ENCODE measurements at regions of chr14 and their contacts with region 1.

Region 1: DNA sequence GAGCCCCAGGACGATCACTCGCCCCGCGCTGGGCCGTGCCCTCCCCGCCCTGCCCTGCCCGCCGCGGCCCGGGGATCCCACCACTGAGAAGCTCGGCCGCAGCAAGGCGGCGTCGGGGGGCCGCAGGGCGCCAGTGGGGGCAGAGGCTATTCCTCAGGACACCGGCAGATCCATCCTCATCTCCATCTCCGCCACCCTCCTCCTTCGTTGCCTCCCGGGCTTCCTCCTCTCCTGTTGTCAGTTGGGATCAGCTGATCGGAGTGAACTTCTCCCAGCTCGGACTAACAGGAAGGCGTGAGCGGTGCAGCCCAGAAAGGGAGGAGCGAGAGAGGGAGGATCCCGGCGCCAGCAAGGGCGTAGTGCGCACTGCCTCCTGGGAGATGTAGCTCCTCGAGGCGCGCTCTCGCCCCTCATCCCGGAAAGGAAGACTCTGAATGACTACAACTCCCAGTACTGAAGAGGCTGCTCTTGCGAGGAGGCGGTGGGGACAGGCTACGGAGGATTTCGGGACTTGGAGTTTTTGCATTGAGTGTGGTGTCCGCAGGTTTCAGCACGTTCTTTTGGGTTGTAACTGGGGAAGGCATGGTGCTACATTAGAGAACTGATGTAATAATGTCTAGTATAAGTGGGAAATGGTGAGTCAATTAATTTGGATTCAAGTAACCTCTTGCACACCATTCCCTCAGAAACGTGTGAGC is at the start of gene ZFYVE1:
- DNase-seq: peak; percentile 96
- ATAC-seq: peak; percentile 99
- H3K4me3 ChIP-seq: peak within 1 kb of the TSS; percentile 71 to 97 (median 84)
- H3K27ac ChIP-seq: peak within 1 kb of the TSS; percentile 56
- H3K4me1 ChIP-seq: peaks cover 22% of the 10 kb centered on the region
- H3K27me3 ChIP-seq: no peaks in the 10 kb centered on the region
- CTCF ChIP-seq: 0 out of 2 replicates have a peak, but pooled peaks have one; percentile 7
- EP300 ChIP-seq: no peak
- POLR2A ChIP-seq: peak; percentile 55 to 69
- RAD21 ChIP-seq: no peak
- total RNA-seq, gene ZFYVE1: 2.6 and 2.8 TPM in 2 replicates

Region 2: DNA sequence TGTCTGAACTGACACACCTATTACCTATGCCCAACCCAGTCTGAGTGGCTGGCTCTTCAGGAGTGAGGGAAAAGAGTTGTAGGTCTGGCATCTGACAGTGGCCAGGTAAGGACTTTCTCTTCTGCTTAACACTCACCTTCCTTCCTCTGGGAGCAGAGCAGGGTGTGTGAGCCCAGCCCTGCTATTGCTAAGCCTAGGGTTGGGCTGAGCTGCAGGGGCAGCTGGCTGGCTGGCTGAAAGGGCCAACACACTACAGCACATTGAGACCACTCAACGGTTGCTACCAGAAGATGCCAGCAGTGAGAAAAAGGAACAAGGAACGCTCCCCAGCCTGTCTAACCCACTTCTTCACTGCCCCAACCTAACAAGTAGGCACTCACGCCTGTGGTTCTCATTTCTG is 334.3 kb before region 1 on chr14:
- CTCF ChIA-PET with region 1: no interaction called
- POLR2A ChIA-PET with region 1: no interaction called
- in situ Hi-C with region 1: no loop called
- intact Hi-C with region 1: no loop called
- DNase-seq: no peak
- ATAC-seq: peak; percentile 60
- H3K4me3 ChIP-seq: no peak overlapping the region
- H3K27ac ChIP-seq: no peak overlapping the region
- H3K4me1 ChIP-seq: no peaks in the 10 kb centered on the region
- H3K27me3 ChIP-seq: no peaks in the 10 kb centered on the region
- CTCF ChIP-seq: no peak
- EP300 ChIP-seq: no peak
- POLR2A ChIP-seq: no peak
- RAD21 ChIP-seq: no peak

Region 3: DNA sequence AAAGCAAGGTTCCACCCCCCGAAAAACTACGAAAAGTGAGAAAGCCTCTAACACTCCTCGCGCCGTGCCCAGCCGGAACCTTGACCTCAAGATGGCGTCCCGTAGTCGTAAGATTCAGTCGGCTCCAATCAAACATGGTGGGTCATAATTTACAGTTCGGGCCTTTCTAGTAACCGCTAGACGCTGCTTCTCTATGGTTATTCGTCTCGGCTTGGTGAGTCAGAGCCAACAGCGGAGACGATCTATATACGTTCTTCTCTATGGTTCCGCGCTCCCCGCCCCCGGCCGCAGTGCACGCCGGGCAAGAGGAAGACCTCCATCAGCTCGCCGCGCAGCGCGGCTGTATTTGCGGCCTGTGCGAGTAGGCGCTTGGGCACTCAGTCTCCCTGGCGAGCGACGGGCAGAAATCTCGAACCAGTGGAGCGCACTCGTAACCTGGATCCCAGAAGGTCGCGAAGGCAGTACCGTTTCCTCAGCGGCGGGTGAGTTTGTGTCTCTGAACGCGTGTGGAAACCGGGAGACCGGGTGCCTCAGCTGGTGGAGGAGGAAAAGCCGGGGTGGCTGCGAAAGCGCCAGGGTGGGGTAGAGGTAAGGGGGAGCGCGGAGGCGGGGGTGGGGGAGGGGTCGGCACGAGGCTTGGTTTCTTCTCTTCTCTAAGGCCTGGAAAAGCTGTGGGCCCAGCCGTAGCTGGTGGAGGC is 31.4 kb after region 1 on chr14 and contains the start of gene RBM25:
- CTCF ChIA-PET with region 1: no interaction called
- POLR2A ChIA-PET with region 1: interaction called, 38 read pairs
- in situ Hi-C with region 1: no loop called
- intact Hi-C with region 1: no loop called
- DNase-seq: peak; percentile 98
- ATAC-seq: peak; percentile 96
- H3K4me3 ChIP-seq: peak within 1 kb of the TSS; percentile 82 to 95 (median 93)
- H3K27ac ChIP-seq: peak within 1 kb of the TSS; percentile 99
- H3K4me1 ChIP-seq: peaks cover 31% of the 10 kb centered on the region
- H3K27me3 ChIP-seq: no peaks in the 10 kb centered on the region; a peak in 1 of 5 replicates
- CTCF ChIP-seq: peak; percentile 47
- EP300 ChIP-seq: peak; percentile 33 to 51; a peak in 3 of 4 replicates
- POLR2A ChIP-seq: peak; percentile 94 to 99
- RAD21 ChIP-seq: no peak
- total RNA-seq, gene RBM25: 52.0 and 65.9 TPM in 2 replicates

Region 4: DNA sequence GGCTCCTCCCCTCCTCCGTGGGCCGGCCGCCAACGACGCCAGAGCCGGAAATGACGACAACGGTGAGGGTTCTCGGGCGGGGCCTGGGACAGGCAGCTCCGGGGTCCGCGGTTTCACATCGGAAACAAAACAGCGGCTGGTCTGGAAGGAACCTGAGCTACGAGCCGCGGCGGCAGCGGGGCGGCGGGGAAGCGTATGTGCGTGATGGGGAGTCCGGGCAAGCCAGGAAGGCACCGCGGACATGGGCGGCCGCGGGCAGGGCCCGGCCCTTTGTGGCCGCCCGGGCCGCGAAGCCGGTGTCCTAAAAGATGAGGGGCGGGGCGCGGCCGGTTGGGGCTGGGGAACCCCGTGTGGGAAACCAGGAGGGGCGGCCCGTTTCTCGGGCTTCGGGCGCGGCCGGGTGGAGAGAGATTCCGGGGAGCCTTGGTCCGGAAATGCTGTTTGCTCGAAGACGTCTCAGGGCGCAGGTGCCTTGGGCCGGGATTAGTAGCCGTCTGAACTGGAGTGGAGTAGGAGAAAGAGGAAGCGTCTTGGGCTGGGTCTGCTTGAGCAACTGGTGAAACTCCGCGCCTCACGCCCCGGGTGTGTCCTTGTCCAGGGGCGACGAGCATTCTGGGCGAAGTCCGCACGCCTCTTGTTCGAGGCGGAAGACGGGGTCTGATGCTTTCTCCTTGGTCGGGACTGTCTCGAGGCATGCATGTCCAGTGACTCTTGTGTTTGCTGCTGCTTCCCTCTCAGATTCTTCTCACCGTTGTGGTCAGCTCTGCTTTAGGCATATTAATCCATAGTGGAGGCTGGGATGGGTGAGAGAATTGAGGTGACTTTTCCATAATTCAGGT is 109.6 kb after region 1 on chr14 and contains the start of gene PSEN1:
- CTCF ChIA-PET with region 1: no interaction called
- POLR2A ChIA-PET with region 1: no interaction called
- in situ Hi-C with region 1: no loop called
- intact Hi-C with region 1: no loop called
- DNase-seq: peak; percentile 84
- ATAC-seq: peak; percentile 91
- H3K4me3 ChIP-seq: peak within 1 kb of the TSS; percentile 87 to 92 (median 87)
- H3K27ac ChIP-seq: peak within 1 kb of the TSS; percentile 73
- H3K4me1 ChIP-seq: peaks cover 16% of the 10 kb centered on the region
- H3K27me3 ChIP-seq: no peaks in the 10 kb centered on the region; a peak in 1 of 5 replicates
- CTCF ChIP-seq: no peak
- EP300 ChIP-seq: no peak
- POLR2A ChIP-seq: peak; percentile 68 to 84; a peak in 3 of 4 replicates
- RAD21 ChIP-seq: no peak
- total RNA-seq, gene PSEN1: 21.8 and 26.6 TPM in 2 replicates

Region 5: DNA sequence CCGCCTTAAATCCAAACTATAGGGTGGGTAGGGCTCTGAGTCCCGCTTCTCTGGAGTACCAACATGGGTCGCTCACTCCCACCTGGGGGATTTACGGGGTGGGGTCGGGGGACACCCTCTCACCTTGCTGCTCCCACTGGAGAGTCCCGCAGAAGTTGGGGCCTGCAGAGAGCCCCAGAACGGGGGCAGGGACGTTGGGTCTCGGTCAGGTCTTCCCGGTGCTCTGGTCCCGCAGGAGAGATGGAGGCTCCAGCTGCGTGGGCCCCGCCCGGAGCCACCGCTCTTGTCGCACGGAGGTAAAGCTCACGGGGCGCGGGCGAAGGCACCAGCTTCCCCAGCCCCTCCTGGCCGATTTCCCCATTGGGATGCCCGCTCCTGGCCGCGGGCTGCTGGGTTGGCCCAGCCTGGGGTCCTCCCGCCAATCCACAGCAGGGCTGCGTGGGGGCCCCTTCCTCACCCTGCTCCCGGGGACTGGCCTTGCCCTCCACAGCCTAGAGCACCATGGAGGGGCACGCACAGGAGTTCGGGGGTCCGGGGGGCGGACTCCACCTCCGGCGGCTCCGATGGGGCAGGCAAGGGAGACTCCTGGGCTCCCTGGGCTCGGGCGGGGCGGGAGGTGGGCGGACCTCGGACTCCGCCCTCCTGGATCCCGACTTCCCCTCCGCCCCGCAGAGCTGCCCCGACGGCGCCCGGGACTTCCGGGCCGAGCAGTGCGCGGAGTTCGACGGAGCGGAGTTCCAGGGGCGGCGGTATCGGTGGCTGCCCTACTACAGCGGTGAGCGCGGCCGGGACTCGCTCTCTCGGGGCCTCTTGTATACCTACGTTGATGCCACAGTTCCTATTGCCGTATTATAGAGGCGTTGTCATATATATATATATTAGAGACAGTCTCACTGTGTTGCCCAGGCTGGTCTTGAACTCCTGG is 218.7 kb after region 1 on chr14:
- CTCF ChIA-PET with region 1: no interaction called
- POLR2A ChIA-PET with region 1: no interaction called
- in situ Hi-C with region 1: no loop called
- intact Hi-C with region 1: no loop called
- DNase-seq: no peak
- ATAC-seq: no peak
- H3K4me3 ChIP-seq: no peak overlapping the region
- H3K27ac ChIP-seq: no peak overlapping the region
- H3K4me1 ChIP-seq: no peaks in the 10 kb centered on the region
- H3K27me3 ChIP-seq: peaks cover 12 to 35% of the 10 kb centered on the region in 2 experiments
- CTCF ChIP-seq: no peak
- EP300 ChIP-seq: no peak
- POLR2A ChIP-seq: no peak
- RAD21 ChIP-seq: no peak

Measured in HepG2 (cell line).